ENCODE measurements at regions of chr5 and their contacts with region 1.

Region 1: GRCh38 chr5:172188033-172188892 is at the start of gene STK10:
- DNase-seq: peak; percentile 75
- ATAC-seq: peak; percentile 86
- H3K4me3 ChIP-seq: peak within 1 kb of the TSS; percentile 93 to 97
- H3K27ac ChIP-seq: peak within 1 kb of the TSS; percentile 75
- H3K4me1 ChIP-seq: peaks cover 10 to 28% of the 10 kb centered on the region in 2 experiments
- H3K27me3 ChIP-seq: no peaks in the 10 kb centered on the region
- CTCF ChIP-seq: peak in 2 of 3 experiments; percentile 76 to 81; a peak in 4 of 6 replicates
- POLR2A ChIP-seq: no peak
- RAD21 ChIP-seq: no peak
- total RNA-seq, gene STK10: 22.9 TPM

Region 2: DNA sequence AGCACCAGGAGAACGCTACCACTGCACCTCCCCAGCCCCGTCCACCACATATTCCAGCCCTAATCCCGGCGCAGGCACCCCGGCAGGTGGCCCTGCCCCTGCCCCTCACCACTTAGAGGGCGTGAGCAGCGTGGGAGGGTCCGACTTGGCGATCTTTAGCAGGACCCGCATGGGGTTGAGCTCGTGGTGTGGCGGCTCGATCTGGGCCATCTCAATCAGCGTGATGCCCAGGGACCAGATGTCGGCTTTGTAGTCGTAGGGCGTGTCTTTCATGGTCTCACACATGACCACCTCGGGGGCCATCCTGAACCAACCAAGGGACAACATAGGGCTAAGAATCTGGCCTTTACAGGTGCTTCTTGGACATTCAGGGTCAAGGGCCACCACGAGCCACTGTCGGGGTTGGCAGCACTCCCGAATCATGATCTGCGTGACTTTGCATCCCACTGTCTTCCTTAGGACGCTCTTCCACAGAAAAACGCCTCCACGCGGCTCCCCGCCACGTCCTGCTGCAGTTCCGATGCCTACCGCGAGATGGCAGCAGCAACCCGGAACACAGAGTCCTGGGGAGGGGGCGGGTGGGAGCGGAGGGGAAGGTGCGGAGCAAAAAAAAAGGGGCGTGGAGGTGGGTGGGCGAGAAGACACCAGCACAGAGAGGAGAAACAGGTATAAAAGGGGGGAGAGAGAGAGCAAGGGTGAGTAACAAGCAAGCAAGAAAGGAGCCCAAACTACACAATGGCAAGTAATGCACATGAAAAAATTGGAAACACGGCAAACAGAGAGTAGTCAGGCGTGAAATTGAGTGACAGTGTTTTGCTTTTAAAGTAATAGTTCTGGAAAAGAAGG is 81.5 kb before region 1 on chr5:
- CTCF ChIA-PET with region 1: interaction called, 4 read pairs
- POLR2A ChIA-PET with region 1: no interaction called
- RAD21 ChIA-PET with region 1: interaction called in 1 of 2 experiments, 3 read pairs
- intact Hi-C with region 1: loop called (anchors 1 kb)
- DNase-seq: no peak
- ATAC-seq: peak; percentile 50
- H3K4me3 ChIP-seq: peak overlapping the region in 1 of 2 experiments; percentile 14; a peak in 1 of 4 replicates
- H3K27ac ChIP-seq: no peak overlapping the region
- H3K4me1 ChIP-seq: peaks cover 17 to 45% of the 10 kb centered on the region in 2 experiments
- H3K27me3 ChIP-seq: no peaks in the 10 kb centered on the region
- CTCF ChIP-seq: peak; percentile 86 to 95 (median 93)
- POLR2A ChIP-seq: no peak
- RAD21 ChIP-seq: peak; percentile 80

Region 3: GRCh38 chr5:172173831-172174153 is 14.5 kb before region 1 on chr5:
- CTCF ChIA-PET with region 1: interaction called, 8 read pairs
- POLR2A ChIA-PET with region 1: interaction called, 9 read pairs
- RAD21 ChIA-PET with region 1: no interaction called
- intact Hi-C with region 1: loop called (anchors 1 kb)
- DNase-seq: no peak
- ATAC-seq: no peak; the same call in 1 of the 2 replicates
- H3K4me3 ChIP-seq: peak overlapping the region in 1 of 2 experiments; percentile 50; a peak in 2 of 4 replicates
- H3K27ac ChIP-seq: peak overlapping the region; percentile 13; the same call in 1 of the 2 replicates
- H3K4me1 ChIP-seq: peaks cover 25 to 42% of the 10 kb centered on the region in 2 experiments
- H3K27me3 ChIP-seq: no peaks in the 10 kb centered on the region
- CTCF ChIP-seq: no peak
- POLR2A ChIP-seq: no peak
- RAD21 ChIP-seq: no peak

Region 4: DNA sequence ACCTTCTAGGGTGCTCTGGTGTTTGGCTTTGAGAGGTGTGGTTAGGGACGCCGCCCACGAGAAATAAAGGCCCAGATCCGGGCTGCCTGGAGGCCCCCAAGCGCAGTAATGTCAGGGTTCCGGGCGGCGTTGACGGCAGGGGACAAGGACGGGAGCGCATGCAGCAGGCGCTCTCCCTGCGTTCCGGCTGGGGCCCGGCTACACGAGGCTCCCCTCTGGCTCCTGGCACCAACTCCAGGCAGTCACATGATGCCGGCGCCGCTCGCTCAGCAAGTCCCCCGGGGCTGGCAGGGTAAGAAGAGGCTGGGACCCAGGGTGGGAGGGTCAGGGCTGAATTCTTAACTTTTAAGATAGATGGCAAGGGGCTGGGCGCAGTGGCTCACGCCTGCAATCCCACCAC is 67.2 kb after region 1 on chr5:
- CTCF ChIA-PET with region 1: no interaction called
- POLR2A ChIA-PET with region 1: no interaction called
- RAD21 ChIA-PET with region 1: no interaction called
- intact Hi-C with region 1: no loop called
- DNase-seq: no peak
- ATAC-seq: no peak
- H3K4me3 ChIP-seq: no peak overlapping the region
- H3K27ac ChIP-seq: no peak overlapping the region
- H3K4me1 ChIP-seq: no peaks in the 10 kb centered on the region
- H3K27me3 ChIP-seq: no peaks in the 10 kb centered on the region
- CTCF ChIP-seq: no peak
- POLR2A ChIP-seq: no peak
- RAD21 ChIP-seq: no peak

Region 5: DNA sequence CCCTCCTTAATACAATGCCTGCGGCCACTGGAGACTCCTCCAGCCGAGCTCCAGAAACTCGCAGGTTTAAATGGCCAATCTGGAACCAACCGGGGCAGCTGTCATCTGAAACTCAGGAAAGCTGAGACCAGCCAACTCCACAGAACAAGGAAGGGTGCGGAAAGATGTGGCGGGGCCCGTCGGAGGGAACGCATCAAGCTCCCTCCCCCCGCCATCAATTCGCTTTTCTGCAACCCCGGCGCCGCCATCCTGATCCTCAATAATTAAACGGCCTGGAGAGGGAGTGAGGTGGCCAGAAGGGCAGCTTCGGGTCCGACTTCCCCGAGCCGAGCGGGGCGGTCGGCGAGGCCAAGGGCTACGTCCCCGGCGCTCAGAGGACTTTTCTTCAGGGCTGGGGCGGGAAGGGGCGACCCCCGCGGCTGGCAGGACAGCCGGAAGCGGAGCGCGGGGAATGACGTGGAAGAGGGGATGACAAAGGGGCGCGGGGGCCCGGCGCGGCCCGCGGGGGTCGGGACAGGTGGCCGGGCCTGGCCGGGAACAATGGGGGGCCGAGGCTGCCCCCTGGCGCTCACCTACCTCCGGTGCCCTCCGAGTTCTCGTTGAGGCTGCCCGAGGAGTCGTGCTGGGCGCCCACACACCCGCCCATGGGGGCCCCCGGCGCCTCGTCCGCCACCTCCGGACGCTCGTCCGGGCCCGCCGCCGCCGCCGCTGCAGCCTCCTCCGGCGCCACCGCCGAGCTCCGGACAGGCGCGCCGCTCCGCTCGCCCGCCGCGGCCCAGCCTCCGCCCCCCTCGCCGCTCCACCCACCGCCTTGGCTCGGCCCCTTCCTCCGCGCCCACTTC is 95.0 kb after region 1 on chr5 and contains the start of gene UBTD2:
- CTCF ChIA-PET with region 1: interaction called, 4 read pairs
- POLR2A ChIA-PET with region 1: interaction called, 5 read pairs
- RAD21 ChIA-PET with region 1: no interaction called
- intact Hi-C with region 1: loop called (anchors 2 kb)
- DNase-seq: no peak
- ATAC-seq: peak; percentile 88
- H3K4me3 ChIP-seq: peak within 1 kb of the TSS; percentile 74 to 90
- H3K27ac ChIP-seq: peak within 1 kb of the TSS; percentile 81
- H3K4me1 ChIP-seq: peaks cover 11 to 20% of the 10 kb centered on the region in 2 experiments; a peak in 3 of 4 replicates
- H3K27me3 ChIP-seq: no peaks in the 10 kb centered on the region
- CTCF ChIP-seq: peak in 1 of 3 experiments; percentile 57; a peak in 4 of 6 replicates
- POLR2A ChIP-seq: no peak
- RAD21 ChIP-seq: peak; percentile 60
- total RNA-seq, gene UBTD2: 15.9 TPM

Region 6: DNA sequence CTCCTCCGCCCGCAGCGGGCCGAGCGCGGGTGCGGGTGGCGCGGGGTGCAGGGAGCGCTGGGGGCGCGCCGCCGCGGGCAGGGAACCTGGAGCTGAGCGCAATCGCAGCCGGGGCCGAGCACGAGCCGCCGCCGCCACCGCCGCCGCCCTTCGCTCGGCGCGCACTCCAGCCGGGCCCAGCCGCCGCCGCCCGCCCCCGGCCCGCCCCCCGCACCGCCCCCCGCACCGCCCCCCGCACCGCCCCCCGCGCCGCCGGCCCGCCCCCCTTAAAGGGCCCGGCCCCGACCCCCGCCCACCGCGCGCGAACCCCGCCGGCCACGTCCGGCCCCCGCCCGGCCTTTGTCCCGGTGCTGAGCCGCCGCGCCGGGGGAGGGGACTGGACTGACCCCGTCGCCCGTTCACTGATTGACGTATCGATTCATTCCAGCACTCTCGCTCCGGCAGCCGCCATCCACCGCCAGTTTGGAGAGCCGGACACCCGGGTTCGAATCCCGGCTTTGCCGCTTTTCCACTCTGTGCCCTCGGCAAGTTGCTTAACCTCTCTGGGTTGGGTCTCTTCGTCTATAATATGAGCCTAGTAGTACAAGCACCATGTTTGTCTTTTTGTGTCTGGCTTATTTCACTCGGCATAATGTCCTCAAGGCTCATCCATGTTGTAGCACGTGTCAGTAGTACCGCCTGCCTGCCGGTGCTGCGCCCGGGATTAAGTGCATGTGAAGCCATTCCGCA is 266.3 kb after region 1 on chr5 and contains the start of gene SH3PXD2B:
- CTCF ChIA-PET with region 1: interaction called, 3 read pairs
- POLR2A ChIA-PET with region 1: no interaction called
- RAD21 ChIA-PET with region 1: no interaction called
- intact Hi-C with region 1: loop called (anchors 10 kb)
- DNase-seq: no peak
- ATAC-seq: peak; percentile 66
- H3K4me3 ChIP-seq: peak within 1 kb of the TSS; percentile 68 to 94
- H3K27ac ChIP-seq: peak within 1 kb of the TSS; percentile 60
- H3K4me1 ChIP-seq: peaks cover 12 to 44% of the 10 kb centered on the region in 2 experiments
- H3K27me3 ChIP-seq: no peaks in the 10 kb centered on the region
- CTCF ChIP-seq: no peak
- POLR2A ChIP-seq: peak; percentile 39
- RAD21 ChIP-seq: no peak
- total RNA-seq, gene SH3PXD2B: 27.5 TPM

Measured in HCT116 (cell line).